MCF 10A (cell line): ENCODE measurements at regions of chr11 and their contacts with region 1.

Region 1: DNA sequence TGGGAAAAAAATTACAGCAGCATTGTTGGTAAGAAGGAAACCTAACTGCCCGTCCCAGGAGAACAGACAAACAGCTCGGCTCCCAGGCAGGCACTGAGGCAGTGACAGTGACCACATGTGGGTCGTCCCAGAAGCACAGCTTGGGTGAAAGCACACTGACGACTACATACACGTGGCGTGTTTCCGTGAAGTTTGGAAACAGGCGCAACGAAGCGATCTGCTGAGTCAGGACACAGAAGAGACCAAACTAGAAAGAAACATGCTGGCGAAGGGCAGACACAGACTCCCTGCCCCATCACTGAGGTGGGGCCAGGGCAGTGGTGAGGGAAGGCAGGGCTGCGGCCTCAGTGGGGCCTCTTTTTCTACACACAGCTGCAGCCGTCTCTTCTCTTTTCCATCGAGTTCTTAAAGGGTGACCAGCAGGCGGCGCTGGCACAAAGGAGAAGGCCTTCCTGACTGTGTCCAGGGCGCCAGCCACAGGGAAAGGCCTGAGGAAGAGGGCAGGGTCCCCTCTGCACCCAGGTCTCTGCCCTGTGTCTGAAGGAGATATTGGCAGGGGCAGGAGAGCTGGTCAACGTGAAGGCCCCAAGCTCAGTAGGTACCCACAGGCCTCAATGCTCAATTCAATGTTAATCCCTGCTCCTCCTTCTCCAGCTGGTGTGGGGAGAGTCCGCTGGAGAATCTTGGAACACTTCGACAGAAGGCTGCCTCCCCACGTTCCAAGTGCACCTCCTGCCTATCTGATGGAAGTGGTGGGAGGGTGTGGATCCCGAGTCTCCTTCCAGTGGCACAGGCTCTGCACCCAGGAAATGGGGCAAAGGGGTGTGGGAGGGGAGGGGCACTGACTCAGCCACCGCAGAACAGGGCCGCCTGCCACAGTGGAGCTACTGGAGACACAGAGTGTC is 19.9 kb downstream of the CARS1 start:
- DNase-seq: peak; percentile 84
- H3K4me3 Mint-ChIP-seq: no peak overlapping the region
- H3K27ac Mint-ChIP-seq: no peak overlapping the region
- H3K4me1 Mint-ChIP-seq: peaks cover 19% of the 10 kb centered on the region
- H3K27me3 Mint-ChIP-seq: no peaks in the 10 kb centered on the region
- CTCF ChIP-seq: peak; percentile 88

Region 2: GRCh38 chr11:2737866-2738265 is 299.4 kb before region 1 on chr11:
- CTCF ChIA-PET with region 1: no interaction called
- POLR2A ChIA-PET with region 1: no interaction called
- intact Hi-C with region 1: no loop called
- DNase-seq: peak; percentile 24
- H3K4me3 Mint-ChIP-seq: no peak overlapping the region
- H3K27ac Mint-ChIP-seq: no peak overlapping the region
- H3K4me1 Mint-ChIP-seq: peaks cover 17% of the 10 kb centered on the region
- H3K27me3 Mint-ChIP-seq: no peaks in the 10 kb centered on the region
- CTCF ChIP-seq: no peak

Region 3: DNA sequence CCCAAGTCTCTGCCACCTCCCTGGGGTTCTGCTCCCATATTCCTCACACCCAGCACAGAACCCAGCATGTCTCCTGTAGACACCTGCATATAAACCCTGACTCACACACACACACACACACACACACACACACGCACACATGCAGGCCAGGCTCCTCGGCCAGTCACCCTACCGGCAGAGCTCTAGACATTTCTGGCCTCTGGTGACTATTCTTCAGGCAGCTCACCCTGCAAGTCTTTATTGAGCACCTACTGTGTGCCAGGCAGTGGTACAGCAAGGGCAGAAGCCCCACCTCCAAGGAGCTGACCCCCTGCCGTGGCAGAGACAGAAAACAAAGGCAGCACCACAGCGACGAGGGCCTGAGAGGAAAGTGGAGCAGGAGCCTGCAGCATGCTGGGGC is 202.0 kb before region 1 on chr11:
- CTCF ChIA-PET with region 1: no interaction called
- POLR2A ChIA-PET with region 1: no interaction called
- intact Hi-C with region 1: no loop called
- DNase-seq: peak; percentile 34
- H3K4me3 Mint-ChIP-seq: no peak overlapping the region
- H3K27ac Mint-ChIP-seq: no peak overlapping the region
- H3K4me1 Mint-ChIP-seq: peaks cover 17% of the 10 kb centered on the region
- H3K27me3 Mint-ChIP-seq: no peaks in the 10 kb centered on the region
- CTCF ChIP-seq: no peak

Region 4: DNA sequence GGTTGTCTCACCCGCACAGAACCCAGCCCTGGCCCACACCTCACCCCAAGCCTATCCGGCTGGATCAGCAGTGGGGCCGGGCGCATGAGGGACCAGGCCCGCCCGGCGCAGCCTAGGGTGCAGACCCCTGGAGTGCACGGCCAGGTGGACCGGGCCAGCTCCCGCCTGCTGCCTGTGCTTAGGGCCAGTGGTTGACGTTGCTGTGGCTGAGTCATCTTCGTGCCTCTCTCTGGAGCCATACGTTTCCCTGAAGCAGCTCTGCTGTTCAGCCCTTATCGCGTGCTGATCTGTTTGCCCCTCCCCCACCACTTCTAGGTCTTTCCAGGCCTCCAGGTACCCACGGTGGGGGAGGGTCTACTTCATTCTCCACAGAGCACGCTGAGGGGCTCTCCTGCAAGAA is 191.2 kb before region 1 on chr11:
- CTCF ChIA-PET with region 1: no interaction called
- POLR2A ChIA-PET with region 1: no interaction called
- intact Hi-C with region 1: no loop called
- DNase-seq: peak; percentile 33
- H3K4me3 Mint-ChIP-seq: no peak overlapping the region
- H3K27ac Mint-ChIP-seq: no peak overlapping the region
- H3K4me1 Mint-ChIP-seq: peaks cover 17% of the 10 kb centered on the region
- H3K27me3 Mint-ChIP-seq: no peaks in the 10 kb centered on the region
- CTCF ChIP-seq: no peak

Region 5: DNA sequence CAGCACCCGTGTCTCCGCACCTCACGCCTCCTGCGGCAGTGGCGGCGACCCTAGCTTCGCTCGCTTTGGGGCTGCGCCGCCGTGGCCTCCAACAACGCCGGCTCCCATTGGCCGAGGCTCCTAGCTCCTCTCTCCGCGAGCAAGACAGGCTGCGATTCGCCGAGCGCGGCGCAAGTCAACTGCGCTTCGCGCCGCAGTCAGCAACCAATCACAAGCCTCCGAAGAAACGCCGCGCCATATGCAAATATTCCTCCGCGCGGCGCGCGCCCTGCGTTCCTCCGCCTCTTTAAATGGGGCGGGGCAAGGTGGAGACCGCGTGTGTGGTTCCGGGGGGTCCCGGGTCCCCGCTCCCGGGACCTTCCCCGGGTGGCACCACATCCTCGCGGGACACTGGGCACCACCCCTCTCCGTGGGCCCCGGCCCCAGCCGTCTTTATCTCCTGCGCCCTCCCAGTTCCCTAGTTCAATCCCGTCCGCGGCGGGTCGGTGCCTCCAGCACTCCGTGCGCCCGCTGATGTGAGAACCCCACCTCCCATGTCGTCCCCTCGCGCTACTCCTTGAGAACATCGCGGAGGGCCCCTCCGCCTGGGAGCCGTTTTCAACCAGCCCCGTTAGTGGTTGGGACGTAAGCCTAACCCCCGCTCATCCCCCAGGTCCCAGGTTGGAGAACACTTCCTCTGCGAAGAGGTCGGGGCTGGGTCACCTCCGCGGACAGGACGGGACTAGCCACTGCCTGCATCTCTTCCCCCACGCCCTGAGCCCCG is 44.9 kb before region 1 on chr11 and contains the start of gene NAP1L4:
- CTCF ChIA-PET with region 1: interaction called, 12 read pairs
- POLR2A ChIA-PET with region 1: interaction called, 12 read pairs
- intact Hi-C with region 1: no loop called
- DNase-seq: peak; percentile 97
- H3K4me3 Mint-ChIP-seq: peak within 1 kb of the TSS; percentile 96
- H3K27ac Mint-ChIP-seq: peak within 1 kb of the TSS; percentile 99
- H3K4me1 Mint-ChIP-seq: peaks cover 21% of the 10 kb centered on the region
- H3K27me3 Mint-ChIP-seq: no peaks in the 10 kb centered on the region
- CTCF ChIP-seq: no peak
- total RNA-seq, gene NAP1L4: 103 TPM in 2 replicates

Region 6: GRCh38 chr11:3014057-3014938 is 23.0 kb before region 1 on chr11:
- CTCF ChIA-PET with region 1: interaction called, 13 read pairs
- POLR2A ChIA-PET with region 1: no interaction called
- intact Hi-C with region 1: no loop called
- DNase-seq: no peak
- H3K4me3 Mint-ChIP-seq: no peak overlapping the region
- H3K27ac Mint-ChIP-seq: no peak overlapping the region
- H3K4me1 Mint-ChIP-seq: no peaks in the 10 kb centered on the region
- H3K27me3 Mint-ChIP-seq: no peaks in the 10 kb centered on the region
- CTCF ChIP-seq: no peak

Region 7: DNA sequence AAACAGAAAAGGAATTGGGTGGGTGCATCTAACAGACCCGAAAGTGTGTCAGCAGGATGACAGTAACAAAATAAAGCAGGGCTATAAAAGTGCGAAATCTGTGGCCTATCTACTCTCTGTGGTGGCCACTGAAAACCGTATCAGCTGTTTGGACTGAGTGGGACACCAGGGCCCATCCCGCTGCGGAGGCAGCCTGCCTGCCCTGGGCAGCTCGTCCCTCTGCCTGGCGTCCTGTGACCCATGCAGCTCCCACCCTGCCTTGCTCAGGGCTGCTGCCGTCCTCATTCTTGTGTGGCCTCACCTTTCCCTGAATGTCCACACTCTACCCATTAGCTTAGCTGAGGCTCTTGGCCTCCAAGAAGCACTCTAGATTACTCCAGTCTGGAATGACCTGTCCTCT is 10.5 kb before region 1 on chr11:
- CTCF ChIA-PET with region 1: interaction called, 21 read pairs
- POLR2A ChIA-PET with region 1: interaction called, 3 read pairs
- intact Hi-C with region 1: no loop called
- DNase-seq: no peak
- H3K4me3 Mint-ChIP-seq: no peak overlapping the region
- H3K27ac Mint-ChIP-seq: no peak overlapping the region
- H3K4me1 Mint-ChIP-seq: peaks cover 20% of the 10 kb centered on the region
- H3K27me3 Mint-ChIP-seq: no peaks in the 10 kb centered on the region
- CTCF ChIP-seq: no peak

Region 8: GRCh38 chr11:3057069-3057963 is 20.0 kb after region 1 on chr11 and contains the start of gene CARS1:
- CTCF ChIA-PET with region 1: interaction called, 113 read pairs
- POLR2A ChIA-PET with region 1: interaction called, 3 read pairs
- intact Hi-C with region 1: no loop called
- DNase-seq: peak; percentile 95
- H3K4me3 Mint-ChIP-seq: peak within 1 kb of the TSS; percentile 96
- H3K27ac Mint-ChIP-seq: peak within 1 kb of the TSS; percentile 92
- H3K4me1 Mint-ChIP-seq: peaks cover 15% of the 10 kb centered on the region
- H3K27me3 Mint-ChIP-seq: no peaks in the 10 kb centered on the region
- CTCF ChIP-seq: no peak
- total RNA-seq, gene CARS1: 144 and 150 TPM in 2 replicates

Region 9: DNA sequence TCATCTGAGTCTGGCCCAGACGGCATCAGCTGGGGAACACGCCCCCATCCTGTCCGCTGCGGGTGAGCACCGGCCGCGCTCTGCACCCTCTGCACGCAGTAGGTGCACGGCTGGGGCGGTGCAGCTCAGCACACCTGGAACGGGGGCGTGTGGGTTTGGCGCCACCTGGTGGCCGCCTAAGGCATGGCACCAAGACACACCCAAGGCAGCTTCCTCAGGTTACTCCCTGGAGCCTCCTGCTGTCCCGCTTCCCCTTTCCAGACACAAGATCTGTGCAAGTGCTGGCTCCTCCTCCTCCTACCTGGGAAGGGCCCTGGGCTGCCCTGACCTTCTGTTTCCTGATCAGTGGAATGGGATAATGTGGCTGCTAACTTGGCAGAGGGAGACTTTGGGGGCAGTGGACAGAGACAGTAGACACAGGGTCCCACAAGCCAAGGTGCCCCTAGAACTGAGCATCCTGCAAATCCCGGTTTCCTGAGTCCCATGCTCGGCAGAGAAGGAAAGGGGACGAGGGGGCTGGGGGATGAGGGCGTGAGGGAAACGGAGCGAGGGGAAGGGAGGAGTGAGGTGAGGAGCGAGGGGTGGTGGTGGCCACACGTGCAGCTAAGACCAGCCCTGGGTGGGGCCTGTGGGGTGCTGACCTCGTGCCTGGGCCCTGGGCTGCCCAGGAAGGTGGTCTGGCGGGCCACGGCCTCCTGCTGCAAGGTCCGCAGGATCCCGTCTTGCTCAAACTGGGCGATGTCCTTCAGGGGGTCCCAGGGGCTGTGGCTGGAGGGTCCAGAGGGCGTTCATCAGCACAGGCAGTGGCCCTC is 54.7 kb after region 1 on chr11:
- CTCF ChIA-PET with region 1: interaction called, 160 read pairs
- POLR2A ChIA-PET with region 1: interaction called, 14 read pairs
- intact Hi-C with region 1: loop called (anchors 1 kb)
- DNase-seq: peak; percentile 83
- H3K4me3 Mint-ChIP-seq: no peak overlapping the region
- H3K27ac Mint-ChIP-seq: no peak overlapping the region
- H3K4me1 Mint-ChIP-seq: peaks cover 27% of the 10 kb centered on the region
- H3K27me3 Mint-ChIP-seq: no peaks in the 10 kb centered on the region
- CTCF ChIP-seq: peak; percentile 100

Region 10: GRCh38 chr11:3609416-3610265 is 572.3 kb after region 1 on chr11:
- CTCF ChIA-PET with region 1: no interaction called
- POLR2A ChIA-PET with region 1: no interaction called
- intact Hi-C with region 1: no loop called
- DNase-seq: peak; percentile 51
- H3K4me3 Mint-ChIP-seq: no peak overlapping the region
- H3K27ac Mint-ChIP-seq: no peak overlapping the region
- H3K4me1 Mint-ChIP-seq: peaks cover 2% of the 10 kb centered on the region
- H3K27me3 Mint-ChIP-seq: peaks cover 6% of the 10 kb centered on the region
- CTCF ChIP-seq: peak; percentile 83